GM10248 (cell line): ENCODE measurements at regions of chr13 and their contacts with region 1.

Region 1: GRCh38 chr13:49240017-49240416 is 7.7 kb upstream of the CDADC1 start:
- DNase-seq: no peak
- CTCF ChIP-seq: peak; percentile 61

Region 2: GRCh38 chr13:49225223-49226090 is 14.6 kb before region 1 on chr13:
- CTCF ChIA-PET with region 1: interaction called, 17 read pairs
- POLR2A ChIA-PET with region 1: no interaction called
- DNase-seq: no peak
- CTCF ChIP-seq: no peak

Region 3: DNA sequence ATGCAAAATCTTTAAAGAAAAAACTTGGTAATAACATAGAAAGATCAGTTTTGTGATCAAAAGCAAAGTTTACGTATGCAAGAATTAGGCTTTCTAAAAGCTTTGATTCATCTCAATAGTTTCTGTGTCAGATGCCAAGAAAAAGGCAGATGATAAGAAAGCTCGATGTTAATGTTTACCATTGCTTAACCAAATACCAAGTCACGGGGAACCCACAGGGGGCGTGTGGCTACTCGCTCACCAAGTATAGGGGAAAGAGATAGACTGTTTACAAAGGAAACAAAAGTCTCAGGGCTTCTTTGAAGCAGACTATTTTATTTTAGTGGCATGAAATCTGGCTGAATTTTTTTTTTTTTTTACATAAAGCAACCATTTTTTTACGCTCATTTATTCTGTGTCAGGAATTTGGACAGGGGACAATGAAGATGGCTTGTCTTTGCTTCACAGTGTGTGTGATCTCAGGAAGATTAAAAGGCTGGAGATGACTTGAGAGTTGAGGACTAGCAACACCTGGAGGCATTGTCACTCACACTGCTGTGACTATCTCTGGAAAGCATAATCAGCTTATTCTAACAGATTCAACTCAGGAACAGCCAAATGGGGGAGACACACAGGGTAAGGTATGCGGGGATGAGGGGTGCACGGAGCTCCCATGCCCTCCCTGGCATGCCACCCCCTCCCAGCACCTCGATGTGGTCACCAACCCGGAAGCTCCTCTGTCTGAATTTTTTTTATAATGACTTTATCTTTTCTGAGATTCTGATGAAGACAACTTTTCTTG is 320.4 kb after region 1 on chr13:
- CTCF ChIA-PET with region 1: no interaction called
- POLR2A ChIA-PET with region 1: no interaction called
- DNase-seq: no peak
- CTCF ChIP-seq: no peak